Activated CD4-positive, alpha-beta T cell treated with anti-CD3 and anti-CD28 coated beads, Interleukin-2, amount 10 ng/mL, durations not matched to agents 24 days and 14 days (primary cell): ENCODE measurements at regions of chr4 and their contacts with region 1.

Region 1: GRCh38 chr4:77579406-77580076 is 26.1 kb upstream of the CXCL13 start:
- DNase-seq: no peak
- H3K4me3 Mint-ChIP-seq: no peak overlapping the region
- H3K27ac Mint-ChIP-seq: peak overlapping the region; percentile 31
- H3K4me1 Mint-ChIP-seq: peaks cover 35% of the 10 kb centered on the region
- H3K27me3 Mint-ChIP-seq: no peaks in the 10 kb centered on the region

Region 2: DNA sequence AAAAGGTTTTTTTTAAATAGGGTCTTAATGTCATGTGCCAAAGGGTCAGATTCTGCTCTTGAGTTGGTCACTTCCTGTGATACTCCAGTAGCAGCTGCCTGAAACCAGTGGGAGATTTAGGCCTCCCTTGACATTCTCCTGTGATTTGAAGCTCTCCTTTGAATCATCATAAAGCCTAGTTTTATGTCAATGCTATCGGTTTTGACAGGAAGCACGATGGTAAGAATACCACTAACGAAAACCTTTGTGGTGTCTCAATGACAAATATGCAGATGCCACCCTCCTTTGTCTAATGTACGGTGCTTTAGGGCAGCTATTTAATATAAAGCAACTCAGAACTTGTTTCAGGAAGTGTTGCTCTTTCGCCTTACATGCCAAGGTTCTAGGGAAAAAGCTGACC is 548.0 kb before region 1 on chr4:
- intact Hi-C with region 1: loop called (anchors 2 kb)
- DNase-seq: peak; percentile 75
- H3K4me3 Mint-ChIP-seq: no peak overlapping the region
- H3K27ac Mint-ChIP-seq: no peak overlapping the region
- H3K4me1 Mint-ChIP-seq: peaks cover 37% of the 10 kb centered on the region
- H3K27me3 Mint-ChIP-seq: peaks cover 8% of the 10 kb centered on the region

Region 3: GRCh38 chr4:77433418-77433733 is 146.2 kb before region 1 on chr4:
- intact Hi-C with region 1: no loop called
- DNase-seq: peak; percentile 80
- H3K4me3 Mint-ChIP-seq: no peak overlapping the region
- H3K27ac Mint-ChIP-seq: no peak overlapping the region
- H3K4me1 Mint-ChIP-seq: peaks cover 8% of the 10 kb centered on the region
- H3K27me3 Mint-ChIP-seq: no peaks in the 10 kb centered on the region

Region 4: DNA sequence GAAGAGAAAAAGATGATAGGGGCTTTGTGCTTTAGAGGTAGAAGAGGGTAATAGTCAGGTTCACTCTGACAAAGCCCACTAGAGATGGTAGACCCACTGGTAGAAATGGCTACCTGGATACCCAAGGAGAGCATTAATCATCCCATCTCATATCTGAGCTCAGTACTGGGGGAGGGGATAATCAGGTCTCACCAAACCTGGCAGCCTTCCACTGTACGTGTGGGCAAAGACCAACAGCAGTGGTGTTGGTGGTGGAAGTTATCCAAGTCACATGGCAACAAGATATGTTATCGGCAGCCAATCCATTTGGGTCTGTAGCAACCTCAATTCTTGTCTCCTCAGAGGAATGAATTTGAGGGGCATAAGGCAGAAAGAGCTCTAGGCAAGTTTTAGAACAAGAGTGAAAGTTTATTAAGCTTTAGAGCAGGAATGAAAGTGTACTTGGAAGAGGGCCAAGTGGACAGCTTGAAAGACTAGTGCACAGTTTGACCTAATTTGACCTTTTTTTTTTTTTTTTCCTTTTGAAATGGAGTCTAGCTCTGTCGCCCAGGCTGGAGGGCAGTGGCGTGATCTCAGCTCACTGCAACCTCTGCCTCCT is 40.9 kb before region 1 on chr4:
- intact Hi-C with region 1: loop called (anchors 1 kb)
- DNase-seq: no peak
- H3K4me3 Mint-ChIP-seq: peak overlapping the region; percentile 43
- H3K27ac Mint-ChIP-seq: peak overlapping the region; percentile 82
- H3K4me1 Mint-ChIP-seq: peaks cover 28% of the 10 kb centered on the region
- H3K27me3 Mint-ChIP-seq: peaks cover 5% of the 10 kb centered on the region

Region 5: GRCh38 chr4:77593993-77594392 is 14.5 kb after region 1 on chr4:
- intact Hi-C with region 1: loop called (anchors 1 kb)
- DNase-seq: no peak
- H3K4me3 Mint-ChIP-seq: no peak overlapping the region
- H3K27ac Mint-ChIP-seq: peak overlapping the region; percentile 84
- H3K4me1 Mint-ChIP-seq: peaks cover 48% of the 10 kb centered on the region
- H3K27me3 Mint-ChIP-seq: no peaks in the 10 kb centered on the region

Region 6: GRCh38 chr4:77862478-77863216 is 283.1 kb after region 1 on chr4 and contains the start of gene MRPL1:
- intact Hi-C with region 1: loop called (anchors 1 kb)
- DNase-seq: peak; percentile 96
- H3K4me3 Mint-ChIP-seq: peak within 1 kb of the TSS; percentile 98
- H3K27ac Mint-ChIP-seq: peak within 1 kb of the TSS; percentile 100
- H3K4me1 Mint-ChIP-seq: peaks cover 47% of the 10 kb centered on the region
- H3K27me3 Mint-ChIP-seq: peaks cover 4% of the 10 kb centered on the region
- total RNA-seq, gene MRPL1: 65.0 and 72.7 TPM in 2 replicates

Region 7: DNA sequence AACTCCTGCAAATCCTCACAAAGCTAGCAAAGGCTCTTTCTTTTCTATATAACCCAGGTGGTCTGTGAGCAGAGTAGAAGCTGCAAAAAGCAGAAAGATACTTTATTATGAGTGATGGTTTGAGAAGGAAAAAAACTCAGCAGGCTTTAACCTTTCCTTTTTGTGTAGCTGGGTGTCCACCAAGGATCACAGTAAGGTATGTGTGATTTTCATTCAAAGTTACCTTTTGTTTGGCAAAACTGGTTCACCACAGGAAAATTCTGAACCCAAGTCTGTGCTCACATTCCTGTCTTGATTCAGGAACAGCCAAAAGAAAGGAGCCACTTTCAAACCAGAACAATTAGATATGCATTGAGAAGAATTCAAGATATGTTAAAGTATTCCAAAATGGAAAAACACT is 513.3 kb after region 1 on chr4:
- intact Hi-C with region 1: no loop called
- DNase-seq: no peak
- H3K4me3 Mint-ChIP-seq: no peak overlapping the region
- H3K27ac Mint-ChIP-seq: no peak overlapping the region
- H3K4me1 Mint-ChIP-seq: no peaks in the 10 kb centered on the region
- H3K27me3 Mint-ChIP-seq: peaks cover 8% of the 10 kb centered on the region

Region 8: GRCh38 chr4:78902298-78902697 is 1322.8 kb after region 1 on chr4:
- intact Hi-C with region 1: no loop called
- DNase-seq: no peak
- H3K4me3 Mint-ChIP-seq: no peak overlapping the region
- H3K27ac Mint-ChIP-seq: no peak overlapping the region
- H3K4me1 Mint-ChIP-seq: no peaks in the 10 kb centered on the region
- H3K27me3 Mint-ChIP-seq: no peaks in the 10 kb centered on the region